Right ventricle myocardium inferior (tissue), 1 donor: ENCODE measurements at regions of chr16 and their contacts with region 1.

Region 1: DNA sequence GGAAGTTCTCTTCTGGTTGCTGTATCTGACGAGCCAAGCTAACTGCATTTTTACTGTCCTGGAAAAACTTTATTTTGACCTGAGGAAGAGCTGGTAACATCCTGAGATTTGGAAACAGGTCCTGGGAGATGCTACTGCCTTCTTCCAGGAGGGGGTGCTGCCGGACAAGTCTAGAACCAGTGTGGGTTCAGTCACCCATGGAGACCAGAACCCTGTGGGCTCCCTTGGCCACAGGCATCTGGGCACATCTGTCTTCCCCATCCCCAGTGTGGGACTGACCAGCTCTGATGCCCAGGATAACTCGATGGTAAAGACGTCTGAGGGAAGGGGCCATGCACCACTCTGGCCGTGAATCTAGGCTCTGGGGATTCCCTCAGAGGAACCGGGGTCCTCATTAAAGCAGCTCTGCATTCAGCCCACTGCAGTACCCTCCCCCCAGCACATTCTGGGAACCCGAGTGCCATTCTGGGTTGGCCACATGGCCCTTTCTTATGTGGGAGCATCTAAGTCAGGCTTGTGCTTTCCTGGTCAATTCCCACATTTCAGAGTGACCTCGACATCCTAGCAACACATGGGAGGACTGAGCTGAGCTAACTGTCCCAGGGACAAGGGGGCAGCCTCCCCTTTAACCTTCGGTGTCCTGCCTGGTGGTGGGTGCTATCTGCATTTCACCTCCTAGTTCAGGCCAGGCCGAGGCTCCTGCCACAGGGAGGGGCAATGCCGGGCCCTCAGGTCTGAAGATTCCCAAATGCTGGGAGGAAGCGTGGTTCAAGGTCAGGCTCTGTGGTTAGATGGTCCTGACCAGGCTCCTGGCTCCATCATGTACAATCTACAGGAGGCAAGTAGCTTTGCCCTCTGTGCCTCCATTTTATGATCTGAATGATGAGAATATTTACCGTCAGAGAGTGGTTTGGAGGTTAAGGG is 6.4 kb downstream of the C16orf86 start:
- DNase-seq: no peak
- ATAC-seq: peak; percentile 28

Region 2: DNA sequence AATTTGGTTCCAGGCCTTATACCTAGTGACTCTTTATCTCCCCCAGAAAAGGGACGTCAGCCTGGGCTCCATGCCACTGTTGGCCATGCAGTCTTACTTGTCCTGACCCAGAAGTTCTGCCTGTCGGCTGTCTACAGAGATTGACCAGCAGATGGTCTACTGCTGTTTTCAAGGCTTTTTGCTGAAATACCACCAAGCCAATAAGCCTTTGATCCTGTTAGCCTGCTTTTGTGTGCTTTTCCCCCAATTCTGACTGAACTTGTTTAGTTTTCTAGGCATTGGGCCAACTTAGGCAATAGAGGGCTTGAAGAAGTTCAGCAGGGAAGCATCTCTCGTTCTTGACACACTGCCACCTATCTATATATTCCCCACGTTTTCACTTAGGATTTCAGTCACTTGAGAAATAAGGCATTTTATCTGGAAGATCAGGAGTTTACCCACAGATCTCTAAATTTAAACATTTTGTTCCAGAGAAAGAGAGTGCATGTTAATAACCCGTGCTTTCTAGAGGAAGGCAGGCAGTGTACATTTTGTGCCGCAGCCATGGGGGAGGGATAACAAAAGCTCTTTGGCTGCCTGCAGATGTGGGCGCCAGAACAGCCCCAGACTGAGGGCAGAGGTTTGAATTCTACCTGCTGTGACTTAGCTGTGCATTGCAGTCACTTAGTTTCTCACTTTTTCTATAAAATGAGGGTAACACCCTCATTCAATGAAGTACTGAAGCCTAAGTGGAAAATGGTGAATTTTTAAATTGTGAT is 40.4 kb before region 1 on chr16:
- intact Hi-C with region 1: no loop called
- DNase-seq: no peak
- ATAC-seq: peak; percentile 79

Region 3: DNA sequence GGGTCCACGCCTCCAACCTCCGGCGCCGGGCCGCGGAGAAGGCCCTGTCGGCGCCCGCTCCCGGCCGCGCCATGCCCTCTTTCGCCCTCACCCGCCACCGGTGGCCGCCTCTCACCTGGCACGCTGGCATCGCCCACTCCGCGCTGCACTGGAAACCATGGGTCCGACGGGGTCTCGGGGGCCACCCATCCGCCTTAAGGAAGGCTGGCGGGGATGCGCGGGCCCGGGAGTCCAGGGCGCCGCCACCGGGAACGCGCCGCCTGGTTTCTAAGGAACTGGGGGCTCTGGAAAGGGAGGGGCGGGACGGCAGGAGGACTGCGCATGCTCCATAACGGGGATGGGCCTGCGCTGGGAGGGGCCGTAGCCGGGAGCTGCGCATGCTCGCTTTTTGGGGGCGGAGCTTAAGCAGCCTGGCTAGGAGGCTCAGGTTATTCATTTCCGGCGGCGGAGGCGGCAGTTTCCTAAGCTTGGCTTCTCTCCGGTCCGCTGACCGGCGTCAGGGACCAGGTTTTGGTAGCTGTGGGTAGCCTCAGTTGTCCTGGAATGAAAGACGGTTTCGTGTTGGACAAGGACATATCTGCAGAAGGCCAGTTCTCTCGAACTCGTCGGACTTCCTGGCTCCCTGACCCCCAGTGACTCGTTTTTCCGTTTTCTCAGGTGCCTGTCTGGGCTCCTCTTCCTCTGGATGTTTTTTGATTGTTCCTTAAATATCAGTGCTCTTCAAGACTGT is 46.2 kb after region 1 on chr16 and contains the start of gene GFOD2:
- intact Hi-C with region 1: loop called (anchors 5 kb)
- DNase-seq: peak; percentile 96
- ATAC-seq: peak; percentile 99
- total RNA-seq, gene GFOD2: 9.0 TPM

Region 4: GRCh38 chr16:67806428-67807147 is 133.6 kb after region 1 on chr16 and contains the starts of genes RANBP10 and TSNAXIP1:
- intact Hi-C with region 1: loop called (anchors 5 kb)
- DNase-seq: peak; percentile 97
- ATAC-seq: peak; percentile 98
- total RNA-seq, gene RANBP10: 11.1 TPM
- total RNA-seq, gene TSNAXIP1: 0.41 TPM

Region 5: GRCh38 chr16:67935402-67936123 is 262.6 kb after region 1 on chr16:
- intact Hi-C with region 1: loop called (anchors 5 kb)
- DNase-seq: peak; percentile 98
- ATAC-seq: peak; percentile 93